ENCODE measurements at regions of chr20 and their contacts with region 1.

Region 1: GRCh38 chr20:25195014-25195961 is at the start of gene ENTPD6:
- DNase-seq: peak; percentile 86
- H3K4me3 Mint-ChIP-seq: peak within 1 kb of the TSS; percentile 77
- H3K27ac Mint-ChIP-seq: peak within 1 kb of the TSS; percentile 5
- H3K4me1 Mint-ChIP-seq: peaks cover 28% of the 10 kb centered on the region
- H3K27me3 Mint-ChIP-seq: no peaks in the 10 kb centered on the region
- CTCF ChIP-seq: no peak
- total RNA-seq, gene ENTPD6: 98.0 and 99.5 TPM in 2 replicates

Region 2: GRCh38 chr20:25237610-25238318 is 42.5 kb after region 1 on chr20:
- CTCF ChIA-PET with region 1: no interaction called
- POLR2A ChIA-PET with region 1: interaction called, 12 read pairs
- intact Hi-C with region 1: no loop called
- DNase-seq: peak; percentile 100
- H3K4me3 Mint-ChIP-seq: peak overlapping the region; percentile 49
- H3K27ac Mint-ChIP-seq: peak overlapping the region; percentile 93
- H3K4me1 Mint-ChIP-seq: peaks cover 62% of the 10 kb centered on the region
- H3K27me3 Mint-ChIP-seq: no peaks in the 10 kb centered on the region
- CTCF ChIP-seq: no peak